ENCODE measurements at regions of chr3 and their contacts with region 1.

Region 1: DNA sequence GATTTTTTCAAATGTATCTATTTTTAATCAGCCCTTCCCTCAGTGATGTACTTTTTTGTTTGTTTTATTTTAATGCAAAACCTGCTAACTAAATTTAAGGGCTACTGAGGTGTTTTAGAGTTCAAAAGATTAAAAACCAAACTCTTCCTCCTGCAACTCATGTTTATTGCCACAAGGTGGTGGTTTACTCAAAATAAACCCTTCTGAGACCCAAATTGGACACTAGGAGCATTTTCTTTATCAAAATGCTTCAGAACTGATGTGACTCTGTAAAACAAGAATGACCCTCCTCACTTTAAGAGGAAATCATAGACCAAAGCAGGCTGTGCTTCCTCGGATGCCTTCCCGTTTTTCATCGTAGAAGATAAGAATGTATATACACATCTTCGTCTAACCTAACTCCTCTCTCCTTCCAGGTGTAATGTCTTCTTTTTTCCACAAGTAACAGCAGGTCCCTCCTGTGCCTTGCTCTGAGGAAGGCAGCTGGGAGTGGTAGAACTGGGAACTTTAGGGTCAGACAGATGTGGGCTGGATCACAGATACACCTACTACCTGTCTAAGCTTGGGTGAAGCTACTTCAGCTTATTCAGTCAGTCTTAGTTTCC is 2.9 kb upstream of the NME9 start:
- DNase-seq: no peak
- ATAC-seq: no peak
- H3K4me3 Mint-ChIP-seq: no peak overlapping the region
- H3K27ac Mint-ChIP-seq: peak overlapping the region; percentile 88
- H3K4me1 Mint-ChIP-seq: peaks cover 39% of the 10 kb centered on the region
- H3K27me3 Mint-ChIP-seq: no peaks in the 10 kb centered on the region; the same call in 1 of the 2 replicates
- CTCF ChIP-seq: 0 out of 2 replicates have a peak, but pooled peaks have one; percentile 30

Region 2: DNA sequence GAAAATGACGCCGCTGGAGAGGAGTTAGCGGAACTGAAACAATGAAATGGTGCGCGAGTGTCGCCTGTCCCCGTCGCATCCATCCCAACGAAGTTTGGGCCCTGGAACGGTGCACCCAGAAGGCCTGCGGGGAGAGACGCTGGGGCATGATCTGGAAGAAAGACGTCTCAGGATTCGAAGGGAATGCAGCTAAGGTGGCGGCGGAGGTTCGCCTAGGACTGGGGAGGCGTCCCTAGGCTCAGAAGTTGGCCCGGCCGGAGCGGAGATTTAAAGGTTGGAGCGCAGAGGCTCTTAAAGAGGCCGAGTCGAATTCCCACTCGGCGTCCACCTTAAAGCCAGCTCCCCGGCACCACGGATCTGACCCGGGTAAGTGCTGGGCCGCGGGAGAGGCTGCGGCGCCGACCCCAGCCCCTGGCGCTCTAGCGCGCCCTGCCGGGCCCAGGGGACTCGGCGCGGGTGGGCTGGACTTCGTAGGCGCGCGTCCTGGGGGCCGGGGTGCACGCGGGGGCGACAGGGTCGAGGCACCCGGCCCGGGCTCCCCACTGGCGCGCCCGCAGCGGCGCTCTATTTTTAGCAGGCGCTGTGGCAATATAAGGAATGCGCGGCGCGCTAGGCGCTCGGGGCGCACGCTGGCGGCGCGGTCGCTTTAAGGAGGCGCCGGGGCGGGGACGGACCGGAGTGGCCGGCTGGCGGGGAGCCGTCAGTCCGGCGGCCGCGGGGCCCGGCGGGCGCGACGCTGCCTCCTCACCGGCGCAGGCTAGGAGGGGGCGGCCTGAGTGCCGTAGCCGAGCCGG is 15.6 kb after region 1 on chr3 and contains the start of gene MRAS:
- CTCF ChIA-PET with region 1: interaction called, 14 read pairs
- POLR2A ChIA-PET with region 1: interaction called, 3 read pairs
- DNase-seq: peak; percentile 79
- ATAC-seq: peak; percentile 76
- H3K4me3 Mint-ChIP-seq: peak within 1 kb of the TSS; percentile 93
- H3K27ac Mint-ChIP-seq: peak within 1 kb of the TSS; percentile 90
- H3K4me1 Mint-ChIP-seq: peaks cover 17% of the 10 kb centered on the region
- H3K27me3 Mint-ChIP-seq: peaks cover 15% of the 10 kb centered on the region
- CTCF ChIP-seq: no peak
- total RNA-seq, gene MRAS: 11.1 to 14.8 TPM (median 11.7 TPM) in 3 replicates

Region 3: GRCh38 chr3:138578141-138578540 is 245.6 kb after region 1 on chr3:
- CTCF ChIA-PET with region 1: no interaction called
- POLR2A ChIA-PET with region 1: no interaction called
- DNase-seq: no peak
- ATAC-seq: no peak
- H3K4me3 Mint-ChIP-seq: no peak overlapping the region
- H3K27ac Mint-ChIP-seq: no peak overlapping the region
- H3K4me1 Mint-ChIP-seq: peaks cover 26% of the 10 kb centered on the region
- H3K27me3 Mint-ChIP-seq: no peaks in the 10 kb centered on the region
- CTCF ChIP-seq: no peak

Measured in WTC11 (cell line).